ENCODE measurements at regions of chr2 and their contacts with region 1.

Region 1: GRCh38 chr2:126302043-126302442 is 353.9 kb upstream of the GYPC start:
- DNase-seq: no peak
- H3K4me3 ChIP-seq: no peak overlapping the region
- H3K4me3 Mint-ChIP-seq: no peak overlapping the region
- H3K27ac Mint-ChIP-seq: peak overlapping the region; percentile 0
- H3K4me1 ChIP-seq: peaks cover 27% of the 10 kb centered on the region
- H3K4me1 Mint-ChIP-seq: peaks cover 11% of the 10 kb centered on the region
- H3K27me3 ChIP-seq: no peaks in the 10 kb centered on the region
- H3K27me3 Mint-ChIP-seq: no peaks in the 10 kb centered on the region
- CTCF ChIP-seq: no peak

Region 2: DNA sequence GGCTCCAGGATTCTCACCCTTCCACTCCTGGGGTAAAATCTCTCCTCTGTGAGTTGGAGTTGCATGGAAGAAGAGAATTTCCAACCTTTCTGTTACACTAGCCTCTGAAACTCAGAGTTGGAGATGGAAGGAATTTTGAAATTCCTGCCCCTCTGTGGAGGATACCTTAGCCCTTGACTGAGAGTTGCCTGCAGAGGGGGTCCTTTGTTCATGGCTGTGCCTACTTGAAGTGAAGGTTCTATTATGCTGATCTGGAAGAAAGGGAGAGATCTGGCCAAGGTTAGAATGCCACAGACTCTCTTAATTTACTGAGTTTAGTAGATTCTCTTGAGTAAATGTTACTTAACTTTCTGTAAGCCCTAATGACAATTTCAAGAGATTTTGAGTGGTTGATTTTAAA is 272.7 kb before region 1 on chr2:
- CTCF ChIA-PET with region 1: no interaction called
- POLR2A ChIA-PET with region 1: no interaction called
- intact Hi-C with region 1: loop called (anchors 10 kb)
- DNase-seq: peak in 1 of 2 experiments; percentile 32
- H3K4me3 ChIP-seq: no peak overlapping the region
- H3K4me3 Mint-ChIP-seq: no peak overlapping the region
- H3K27ac Mint-ChIP-seq: no peak overlapping the region
- H3K4me1 ChIP-seq: peaks cover 8% of the 10 kb centered on the region; the same call in 1 of the 2 replicates
- H3K4me1 Mint-ChIP-seq: no peaks in the 10 kb centered on the region
- H3K27me3 ChIP-seq: no peaks in the 10 kb centered on the region
- H3K27me3 Mint-ChIP-seq: no peaks in the 10 kb centered on the region
- CTCF ChIP-seq: peak in 1 of 2 experiments; percentile 36

Region 3: GRCh38 chr2:126050991-126051736 is 250.9 kb before region 1 on chr2:
- CTCF ChIA-PET with region 1: no interaction called
- POLR2A ChIA-PET with region 1: no interaction called
- intact Hi-C with region 1: loop called (anchors 5 kb)
- DNase-seq: no peak
- H3K4me3 ChIP-seq: no peak overlapping the region
- H3K4me3 Mint-ChIP-seq: no peak overlapping the region
- H3K27ac Mint-ChIP-seq: peak overlapping the region; percentile 49
- H3K4me1 ChIP-seq: peaks cover 37% of the 10 kb centered on the region
- H3K4me1 Mint-ChIP-seq: peaks cover 14% of the 10 kb centered on the region
- H3K27me3 ChIP-seq: no peaks in the 10 kb centered on the region
- H3K27me3 Mint-ChIP-seq: no peaks in the 10 kb centered on the region
- CTCF ChIP-seq: no peak